K562 (cell line): ENCODE measurements at regions of chr17 and their contacts with region 1.

Region 1: DNA sequence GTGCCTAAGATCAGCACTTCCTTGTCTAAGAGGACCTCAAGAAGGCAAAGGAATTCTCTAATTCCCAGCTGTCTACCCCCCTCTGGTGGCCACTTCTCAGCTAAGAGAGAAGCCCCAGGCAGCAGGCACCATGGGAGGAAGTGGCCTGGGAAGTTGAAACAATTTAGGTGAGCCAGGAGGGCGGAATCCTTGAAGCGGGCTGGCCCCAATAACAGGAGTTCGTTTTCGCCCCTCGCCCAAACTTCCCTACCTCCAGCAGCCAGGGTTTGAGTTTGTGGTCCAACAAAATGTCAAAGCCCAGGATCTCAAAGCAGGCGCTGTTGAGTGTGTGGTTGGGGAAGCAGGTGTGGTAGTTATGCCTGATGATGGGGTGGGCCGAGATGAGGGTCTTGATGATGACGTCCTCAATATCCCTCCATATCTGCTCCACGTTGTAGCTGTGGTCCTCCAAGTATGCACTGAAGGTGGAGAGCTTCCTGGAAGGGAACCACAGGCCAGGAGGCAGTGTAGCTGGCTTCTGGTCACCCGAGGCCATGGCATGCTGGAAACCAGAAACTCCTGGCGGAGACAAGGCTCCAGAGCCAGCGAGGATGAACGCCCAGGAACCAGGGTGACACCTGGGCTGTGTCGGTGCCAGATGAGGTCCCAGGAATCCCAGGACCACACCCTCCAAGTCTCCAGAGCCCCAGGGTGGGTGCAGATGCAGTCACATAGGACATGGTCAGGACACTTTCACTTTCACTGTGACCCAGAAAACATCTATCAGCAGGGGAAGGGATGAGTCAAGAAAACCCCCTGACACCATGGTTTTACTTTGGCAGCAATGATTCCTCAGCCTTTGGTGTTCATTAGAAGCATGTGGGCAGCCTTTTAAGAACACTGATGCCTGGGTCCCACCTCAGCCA is 25.6 kb downstream of the TTLL6 start:
- DNase-seq: peak; percentile 68 to 79 (median 72)
- ATAC-seq: peak; percentile 94
- H3K4me3 ChIP-seq: no peak overlapping the region
- H3K27ac ChIP-seq: no peak overlapping the region
- H3K4me1 ChIP-seq: peaks cover 0 to 3% of the 10 kb centered on the region in 2 experiments; a peak in 2 of 5 replicates
- H3K27me3 ChIP-seq: peaks cover 53 to 85% of the 10 kb centered on the region in 2 experiments
- CTCF ChIP-seq: peak; percentile 80 to 92 (median 87)
- EP300 ChIP-seq: no peak
- POLR2A ChIP-seq: no peak
- RAD21 ChIP-seq: peak; percentile 84 to 91

Region 2: DNA sequence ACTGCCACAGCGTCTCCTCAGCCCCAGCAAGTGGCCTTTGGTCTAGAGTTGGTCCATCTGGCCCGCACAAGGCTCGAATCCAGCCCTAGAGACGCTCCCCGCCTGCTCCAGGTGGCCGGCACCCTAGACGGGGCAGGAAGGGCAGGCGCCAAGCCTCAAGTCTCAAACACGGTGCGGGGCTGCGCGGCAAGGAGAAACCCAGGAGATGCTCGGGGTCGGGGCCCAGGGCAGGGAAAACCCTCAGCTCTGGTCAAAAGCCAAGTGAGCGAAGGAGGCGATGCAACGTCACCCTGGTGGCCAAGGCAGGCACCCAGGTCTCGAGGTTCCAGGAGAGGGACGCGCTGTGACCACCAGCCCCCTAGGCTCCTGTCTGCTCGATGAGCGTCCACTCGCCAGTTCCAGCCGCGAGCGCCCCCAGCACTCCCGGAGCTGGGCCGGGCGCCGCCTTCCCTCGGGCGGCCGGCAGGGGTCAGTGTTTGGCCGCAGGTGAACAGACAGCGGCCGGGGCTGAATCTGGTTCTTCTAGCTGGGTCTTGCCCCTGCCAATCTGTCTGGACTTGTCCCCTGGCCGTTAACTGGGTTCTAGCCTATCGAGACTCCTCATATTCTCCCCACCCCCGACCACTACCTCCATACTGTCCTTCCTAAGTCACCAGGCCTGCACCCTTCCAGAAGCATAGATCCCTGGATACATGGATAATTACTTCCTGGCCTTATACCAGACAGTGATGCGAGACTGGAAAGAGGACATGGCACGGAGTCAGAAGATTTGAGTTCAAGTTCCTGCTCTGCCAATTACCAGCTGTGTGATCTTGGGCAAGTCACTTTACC is 113.0 kb before region 1 on chr17:
- CTCF ChIA-PET with region 1: interaction called, 31 read pairs
- POLR2A ChIA-PET with region 1: interaction called, 4 read pairs
- in situ Hi-C with region 1: loop called (anchors 5 kb)
- intact Hi-C with region 1: loop called (anchors 1 kb)
- DNase-seq: peak; percentile 82 to 87 (median 85)
- ATAC-seq: peak; percentile 99
- H3K4me3 ChIP-seq: no peak overlapping the region
- H3K27ac ChIP-seq: no peak overlapping the region
- H3K4me1 ChIP-seq: peaks cover 0 to 8% of the 10 kb centered on the region in 2 experiments; a peak in 2 of 5 replicates
- H3K27me3 ChIP-seq: peaks cover 20 to 21% of the 10 kb centered on the region in 2 experiments; a peak in 4 of 5 replicates
- CTCF ChIP-seq: peak; percentile 96 to 99 (median 98)
- EP300 ChIP-seq: no peak
- POLR2A ChIP-seq: no peak
- RAD21 ChIP-seq: peak; percentile 85 to 90

Region 3: GRCh38 chr17:48724251-48725003 is 67.0 kb before region 1 on chr17:
- CTCF ChIA-PET with region 1: interaction called, 9 read pairs
- POLR2A ChIA-PET with region 1: no interaction called
- in situ Hi-C with region 1: no loop called
- intact Hi-C with region 1: loop called (anchors 1 kb)
- DNase-seq: peak; percentile 57 to 76 (median 61)
- ATAC-seq: peak; percentile 96
- H3K4me3 ChIP-seq: no peak overlapping the region
- H3K27ac ChIP-seq: no peak overlapping the region
- H3K4me1 ChIP-seq: peaks cover 0 to 24% of the 10 kb centered on the region in 2 experiments; a peak in 2 of 5 replicates
- H3K27me3 ChIP-seq: peaks cover 68 to 84% of the 10 kb centered on the region in 2 experiments
- CTCF ChIP-seq: peak; percentile 79 to 84 (median 80)
- EP300 ChIP-seq: no peak
- POLR2A ChIP-seq: no peak
- RAD21 ChIP-seq: peak; percentile 46 to 73